Left ventricle myocardium superior (tissue), 1 donor: ENCODE measurements at regions of chr11 and their contacts with region 1.

Region 1: GRCh38 chr11:36809303-36809702 is 211.3 kb upstream of the RAG2 start:
- DNase-seq: no peak
- ATAC-seq: no peak

Region 2: DNA sequence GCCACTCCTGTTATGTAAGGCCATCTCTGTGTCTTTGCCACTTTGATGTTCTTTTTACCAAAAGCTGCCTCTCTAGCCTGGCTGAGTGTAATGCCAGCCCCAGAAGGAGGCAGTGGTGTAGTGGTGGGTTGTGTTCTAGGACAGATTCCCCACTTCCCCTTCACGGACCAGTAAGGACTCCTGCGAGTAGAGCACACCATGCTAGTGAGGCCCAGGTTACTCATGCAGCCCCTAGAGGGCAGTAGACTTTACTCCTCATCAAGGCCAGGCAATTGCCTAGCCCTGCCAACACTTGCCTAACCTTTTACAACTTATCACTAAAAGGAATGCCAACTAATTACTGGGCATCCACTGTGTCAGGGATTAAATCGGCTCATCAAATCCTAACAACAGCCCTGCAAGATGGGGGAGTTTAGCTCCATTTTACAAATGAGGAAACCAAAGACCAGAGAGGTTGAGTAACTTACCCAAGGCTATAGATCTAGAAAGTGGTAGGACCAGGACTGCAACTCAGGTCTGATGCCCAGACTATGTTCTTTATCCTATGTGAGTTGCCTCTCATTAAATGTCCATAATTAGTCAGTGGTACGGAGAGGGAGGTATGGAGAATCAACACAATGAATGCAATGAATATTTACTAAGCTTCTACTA is 1968.4 kb before region 1 on chr11:
- intact Hi-C with region 1: loop called (anchors 5 kb)
- DNase-seq: no peak
- ATAC-seq: peak; percentile 28

Region 3: GRCh38 chr11:36631774-36632173 is 177.5 kb before region 1 on chr11:
- intact Hi-C with region 1: no loop called
- DNase-seq: no peak
- ATAC-seq: no peak